ENCODE measurements at regions of chr2 and their contacts with region 1.

Region 1: DNA sequence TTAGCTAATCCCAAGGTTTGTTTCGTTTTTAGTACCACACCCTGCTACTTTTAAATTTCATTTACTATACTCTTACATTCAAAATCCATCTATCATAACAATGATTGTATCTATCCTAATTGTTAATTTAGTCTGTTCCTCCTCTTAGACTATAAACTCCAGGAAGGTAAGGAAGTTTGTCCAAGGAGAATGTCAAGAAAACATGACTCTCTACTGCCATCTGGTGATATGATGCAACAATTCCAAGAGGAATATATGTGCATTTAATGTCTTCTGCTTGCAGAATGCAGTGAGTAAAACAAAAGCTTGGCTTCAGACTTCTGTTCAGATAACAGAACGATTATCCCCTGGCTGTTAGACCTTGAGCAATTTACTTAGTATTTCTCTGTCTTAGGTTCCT is 1267.1 kb downstream of the LRP1B start:
- DNase-seq: peak; percentile 69
- ATAC-seq: peak; percentile 80
- H3K4me3 ChIP-seq: no peak overlapping the region
- H3K27ac ChIP-seq: no peak overlapping the region
- H3K4me1 ChIP-seq: no peaks in the 10 kb centered on the region
- H3K27me3 ChIP-seq: no peaks in the 10 kb centered on the region
- CTCF ChIP-seq: peak; percentile 67
- POLR2A ChIP-seq: no peak
- RAD21 ChIP-seq: peak; percentile 63

Region 2: GRCh38 chr2:140586379-140586778 is 277.3 kb before region 1 on chr2:
- CTCF ChIA-PET with region 1: no interaction called
- POLR2A ChIA-PET with region 1: no interaction called
- dilution Hi-C with region 1: no loop called
- in situ Hi-C with region 1: no loop called
- intact Hi-C with region 1: loop called (anchors 5 kb)
- DNase-seq: peak; percentile 30
- ATAC-seq: peak; percentile 74
- H3K4me3 ChIP-seq: no peak overlapping the region
- H3K27ac ChIP-seq: no peak overlapping the region
- H3K4me1 ChIP-seq: no peaks in the 10 kb centered on the region
- H3K27me3 ChIP-seq: no peaks in the 10 kb centered on the region
- CTCF ChIP-seq: peak; percentile 48
- POLR2A ChIP-seq: no peak
- RAD21 ChIP-seq: peak; percentile 50

Region 3: DNA sequence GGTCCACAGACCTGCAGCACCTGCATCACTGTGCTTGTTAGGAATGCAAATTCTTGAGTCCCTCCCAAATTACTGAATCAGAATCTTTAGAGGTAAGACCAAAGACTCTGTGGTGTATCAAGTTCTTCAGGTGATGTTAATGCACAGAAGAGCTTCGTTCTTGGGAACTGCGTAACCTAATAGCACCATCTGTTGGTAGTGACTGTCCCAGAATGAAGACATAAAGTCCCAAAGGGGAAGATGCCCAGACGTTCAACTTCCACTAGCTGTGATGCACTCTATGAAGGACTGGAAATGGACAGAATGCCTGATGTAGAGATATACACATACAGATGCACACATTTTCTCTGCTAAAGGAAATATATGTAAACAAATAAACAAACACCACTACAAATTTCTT is 691.1 kb after region 1 on chr2:
- CTCF ChIA-PET with region 1: interaction called, 5 read pairs
- POLR2A ChIA-PET with region 1: no interaction called
- dilution Hi-C with region 1: no loop called
- in situ Hi-C with region 1: no loop called
- intact Hi-C with region 1: loop called (anchors 10 kb)
- DNase-seq: peak; percentile 55
- ATAC-seq: peak; percentile 74
- H3K4me3 ChIP-seq: no peak overlapping the region
- H3K27ac ChIP-seq: no peak overlapping the region
- H3K4me1 ChIP-seq: no peaks in the 10 kb centered on the region
- H3K27me3 ChIP-seq: no peaks in the 10 kb centered on the region
- CTCF ChIP-seq: peak; percentile 67
- POLR2A ChIP-seq: no peak
- RAD21 ChIP-seq: peak; percentile 81

Measured in IMR-90 (cell line).